T-cell (primary cell): ENCODE measurements at regions of chr17 and their contacts with region 1.

Region 1: GRCh38 chr17:1122533-1123392 is 57.0 kb downstream of the ABR start:
- DNase-seq: peak; percentile 47 to 87 (median 75)
- ATAC-seq: peak; percentile 86 to 93 (median 90)
- H3K4me3 ChIP-seq: no peak overlapping the region
- H3K4me3 Mint-ChIP-seq: peak overlapping the region in 1 of 3 donors; percentile 5
- H3K27ac ChIP-seq: no peak overlapping the region
- H3K27ac Mint-ChIP-seq: peak overlapping the region in 1 of 2 donors; percentile 52
- H3K4me1 ChIP-seq: peaks cover 0 to 37% of the 10 kb centered on the region in 2 experiments
- H3K4me1 Mint-ChIP-seq: peaks cover 9 to 13% (median 11%) of the 10 kb centered on the region in 3 donors
- H3K27me3 ChIP-seq: peaks cover 0 to 7% of the 10 kb centered on the region in 2 experiments
- H3K27me3 Mint-ChIP-seq: no peaks in the 10 kb centered on the region

Region 2: GRCh38 chr17:1098387-1098786 is 24.4 kb before region 1 on chr17:
- CTCF ChIA-PET with region 1: no interaction called
- POLR2A ChIA-PET with region 1: no interaction called
- DNase-seq: no peak
- ATAC-seq: peak in 1 of 4 experiments; percentile 25
- H3K4me3 ChIP-seq: no peak overlapping the region
- H3K4me3 Mint-ChIP-seq: peak overlapping the region in 1 of 3 donors; percentile 5
- H3K27ac ChIP-seq: no peak overlapping the region
- H3K27ac Mint-ChIP-seq: peak overlapping the region in 1 of 2 donors; percentile 9
- H3K4me1 ChIP-seq: peaks cover 4 to 27% of the 10 kb centered on the region in 2 experiments
- H3K4me1 Mint-ChIP-seq: peaks cover 12 to 45% (median 37%) of the 10 kb centered on the region in 3 donors
- H3K27me3 ChIP-seq: no peaks in the 10 kb centered on the region
- H3K27me3 Mint-ChIP-seq: no peaks in the 10 kb centered on the region

Region 3: GRCh38 chr17:1186923-1187771 is 64.4 kb after region 1 on chr17:
- CTCF ChIA-PET with region 1: interaction called, 5 to 13 read pairs
- POLR2A ChIA-PET with region 1: no interaction called
- DNase-seq: peak; percentile 32 to 86 (median 63)
- ATAC-seq: peak; percentile 87 to 93 (median 90)
- H3K4me3 ChIP-seq: no peak overlapping the region
- H3K4me3 Mint-ChIP-seq: no peak overlapping the region
- H3K27ac ChIP-seq: no peak overlapping the region
- H3K27ac Mint-ChIP-seq: no peak overlapping the region
- H3K4me1 ChIP-seq: peaks cover 0 to 19% of the 10 kb centered on the region in 2 experiments
- H3K4me1 Mint-ChIP-seq: peaks cover 0 to 14% (median 11%) of the 10 kb centered on the region in 3 donors
- H3K27me3 ChIP-seq: peaks cover 0 to 28% of the 10 kb centered on the region in 2 experiments
- H3K27me3 Mint-ChIP-seq: peaks cover 0 to 9% of the 10 kb centered on the region in 2 donors